ENCODE measurements at regions of chr10 and their contacts with region 1.

Region 1: DNA sequence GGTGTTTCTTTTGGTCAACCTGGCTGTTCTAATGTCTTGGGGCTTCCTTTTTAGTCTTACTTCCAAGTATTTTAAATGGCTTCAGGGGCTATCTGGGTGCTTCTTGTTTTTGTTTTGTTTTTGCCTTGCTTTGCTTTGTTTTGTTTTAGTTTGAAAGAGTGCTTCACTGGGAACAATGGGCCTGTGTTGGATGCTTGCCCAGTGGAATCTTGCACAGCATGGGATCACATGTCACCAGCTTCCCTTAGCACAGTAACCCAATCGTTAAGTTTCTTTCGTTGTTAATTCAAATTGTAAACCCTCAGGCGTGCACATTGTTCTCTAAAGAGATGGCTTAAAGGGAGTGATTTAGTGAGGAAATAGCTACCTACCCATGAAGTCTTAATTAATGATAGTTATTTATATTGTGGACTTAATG is 8.9 kb downstream of the COL17A1 start:
- DNase-seq: no peak
- H3K4me3 ChIP-seq: no peak overlapping the region
- H3K4me3 Mint-ChIP-seq: no peak overlapping the region
- H3K27ac ChIP-seq: no peak overlapping the region
- H3K27ac Mint-ChIP-seq: no peak overlapping the region
- H3K4me1 ChIP-seq: no peaks in the 10 kb centered on the region
- H3K4me1 Mint-ChIP-seq: no peaks in the 10 kb centered on the region
- H3K27me3 ChIP-seq: no peaks in the 10 kb centered on the region
- H3K27me3 Mint-ChIP-seq: peaks cover 0 to 4% (median 2%) of the 10 kb centered on the region in 3 donors
- CTCF ChIP-seq: no peak

Region 2: DNA sequence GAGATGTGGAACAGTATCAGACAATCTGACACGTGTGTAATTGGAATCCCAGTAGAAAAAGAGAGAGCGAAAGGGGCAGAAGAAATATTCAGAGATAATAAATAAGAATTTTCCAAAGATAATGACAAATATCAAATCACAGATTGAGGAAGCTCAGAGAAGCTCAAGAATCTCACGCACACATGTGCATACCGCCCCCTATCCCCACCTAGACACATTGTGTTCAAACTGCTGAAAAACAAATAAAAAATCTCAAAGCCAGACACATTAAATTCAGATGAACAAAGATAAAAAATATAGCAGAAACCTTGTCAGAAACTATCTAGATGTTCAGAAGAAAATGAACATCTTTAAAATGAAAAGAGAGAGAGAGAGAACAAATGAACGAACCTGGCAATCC is 62.5 kb after region 1 on chr10:
- intact Hi-C with region 1: loop called in 1 of 2 experiments (anchors 10 kb)
- DNase-seq: peak; percentile 12 to 32 (median 19)
- H3K4me3 ChIP-seq: no peak overlapping the region
- H3K4me3 Mint-ChIP-seq: no peak overlapping the region
- H3K27ac ChIP-seq: no peak overlapping the region
- H3K27ac Mint-ChIP-seq: no peak overlapping the region
- H3K4me1 ChIP-seq: peaks cover 0 to under 1% of the 10 kb centered on the region in 2 donors
- H3K4me1 Mint-ChIP-seq: peaks cover 7% of the 10 kb centered on the region
- H3K27me3 ChIP-seq: peaks cover 0 to 2% of the 10 kb centered on the region in 2 donors
- H3K27me3 Mint-ChIP-seq: peaks cover 0 to 6% (median 4%) of the 10 kb centered on the region in 3 donors
- CTCF ChIP-seq: peak; percentile 64

Measured in CD14-positive monocyte (primary cell).